Common myeloid progenitor, CD34-positive (primary cell): ENCODE measurements at regions of chr2 and their contacts with region 1.

Region 1: DNA sequence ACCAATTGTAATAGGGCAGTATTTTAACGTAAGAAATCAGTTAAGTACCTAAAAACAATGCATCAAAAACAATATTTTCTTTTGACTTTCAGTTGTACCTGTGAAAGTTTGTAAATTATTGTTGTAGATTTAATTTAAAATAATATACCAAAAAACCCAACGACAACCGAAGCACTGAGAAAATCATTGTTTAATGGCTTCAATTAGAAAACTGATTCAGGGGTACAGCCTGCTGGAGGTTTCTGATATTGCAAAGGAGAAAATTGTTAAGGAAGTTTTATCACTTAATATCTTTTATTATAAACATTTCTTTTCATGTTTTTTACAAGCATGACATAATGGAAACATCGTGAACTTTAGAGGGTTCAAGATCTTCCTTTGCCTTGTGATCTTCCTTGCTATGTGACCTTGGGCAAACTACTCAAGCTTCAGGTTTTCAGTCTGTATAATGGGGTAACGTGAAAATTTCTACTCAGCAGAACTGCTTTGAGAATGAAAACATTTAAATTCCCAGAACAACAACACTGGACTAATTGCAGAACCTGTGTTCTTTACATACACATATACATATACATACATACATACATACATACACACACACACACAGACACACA is 76.3 kb upstream of the GLS start:
- DNase-seq: peak; percentile 22 to 66 (median 58)
- H3K4me3 ChIP-seq: no peak overlapping the region
- H3K27ac ChIP-seq: no peak overlapping the region
- H3K4me1 ChIP-seq: no peaks in the 10 kb centered on the region
- H3K27me3 ChIP-seq: no peaks in the 10 kb centered on the region

Region 2: GRCh38 chr2:190657474-190658255 is 146.6 kb before region 1 on chr2:
- CTCF ChIA-PET with region 1: no interaction called
- POLR2A ChIA-PET with region 1: no interaction called
- DNase-seq: no peak
- H3K4me3 ChIP-seq: no peak overlapping the region
- H3K27ac ChIP-seq: no peak overlapping the region
- H3K4me1 ChIP-seq: peaks cover 2 to 19% (median 5%) of the 10 kb centered on the region in 4 experiments
- H3K27me3 ChIP-seq: no peaks in the 10 kb centered on the region

Region 3: GRCh38 chr2:190791347-190791975 is 12.8 kb before region 1 on chr2:
- CTCF ChIA-PET with region 1: interaction called, 22 read pairs
- POLR2A ChIA-PET with region 1: no interaction called
- DNase-seq: peak in 2 of 3 donors; percentile 25 to 44
- H3K4me3 ChIP-seq: no peak overlapping the region
- H3K27ac ChIP-seq: no peak overlapping the region
- H3K4me1 ChIP-seq: peaks cover 3 to 16% (median 12%) of the 10 kb centered on the region in 4 experiments
- H3K27me3 ChIP-seq: no peaks in the 10 kb centered on the region